ENCODE measurements at regions of chr4 and their contacts with region 1.

Region 1: GRCh38 chr4:102439236-102439614 is 61.9 kb upstream of the NFKB1 start:
- ATAC-seq: peak; percentile 61 to 86 (median 72)
- H3K4me3 ChIP-seq: no peak overlapping the region
- H3K27ac ChIP-seq: peak overlapping the region in 1 of 2 donors; percentile 25
- H3K4me1 ChIP-seq: peaks cover 4 to 14% of the 10 kb centered on the region in 2 donors

Region 2: DNA sequence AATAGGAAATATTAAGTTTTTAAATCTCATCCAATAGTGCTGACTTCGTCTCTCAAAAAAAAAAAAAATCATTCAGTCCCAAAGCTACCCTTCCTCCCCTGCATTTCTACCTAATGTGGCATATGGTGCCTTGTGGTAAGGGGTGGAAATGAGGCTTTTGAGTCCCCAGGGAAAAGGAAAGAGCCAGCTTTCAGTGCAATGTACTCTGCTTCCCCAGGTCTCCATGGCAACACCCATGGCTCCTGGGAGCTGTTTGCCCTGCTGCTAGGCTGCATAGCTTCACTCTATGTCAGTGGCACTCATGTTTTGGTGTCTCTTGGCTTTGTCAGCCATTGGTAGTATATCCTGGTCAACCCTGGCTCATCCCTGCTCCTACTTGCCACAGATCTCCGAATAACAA is 269.9 kb before region 1 on chr4:
- in situ Hi-C with region 1: no loop called
- ATAC-seq: peak; percentile 49 to 100 (median 100)
- H3K4me3 ChIP-seq: no peak overlapping the region
- H3K27ac ChIP-seq: no peak overlapping the region
- H3K4me1 ChIP-seq: peaks cover 3 to 15% of the 10 kb centered on the region in 2 donors

Region 3: DNA sequence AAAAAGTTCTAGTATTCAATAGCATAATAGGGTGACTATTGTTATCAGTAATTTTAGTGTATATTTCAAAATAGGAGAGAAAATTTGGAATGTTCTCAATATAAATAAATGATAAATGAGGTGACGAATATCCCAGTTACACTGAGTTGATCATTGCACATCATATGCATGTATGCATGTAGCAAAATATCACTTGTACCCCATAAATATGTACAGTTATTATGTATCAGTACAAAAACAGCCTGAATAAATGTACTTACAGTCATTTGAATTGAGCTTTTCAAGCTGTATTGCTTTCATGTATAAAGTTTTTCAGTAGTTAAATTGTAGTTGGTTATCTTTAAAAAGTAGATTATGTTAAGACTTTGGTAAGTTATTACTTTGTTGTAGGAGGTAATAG is 442.1 kb after region 1 on chr4:
- in situ Hi-C with region 1: no loop called
- ATAC-seq: peak in 1 of 8 experiments; percentile 83
- H3K4me3 ChIP-seq: no peak overlapping the region
- H3K27ac ChIP-seq: no peak overlapping the region
- H3K4me1 ChIP-seq: no peaks in the 10 kb centered on the region

Region 4: DNA sequence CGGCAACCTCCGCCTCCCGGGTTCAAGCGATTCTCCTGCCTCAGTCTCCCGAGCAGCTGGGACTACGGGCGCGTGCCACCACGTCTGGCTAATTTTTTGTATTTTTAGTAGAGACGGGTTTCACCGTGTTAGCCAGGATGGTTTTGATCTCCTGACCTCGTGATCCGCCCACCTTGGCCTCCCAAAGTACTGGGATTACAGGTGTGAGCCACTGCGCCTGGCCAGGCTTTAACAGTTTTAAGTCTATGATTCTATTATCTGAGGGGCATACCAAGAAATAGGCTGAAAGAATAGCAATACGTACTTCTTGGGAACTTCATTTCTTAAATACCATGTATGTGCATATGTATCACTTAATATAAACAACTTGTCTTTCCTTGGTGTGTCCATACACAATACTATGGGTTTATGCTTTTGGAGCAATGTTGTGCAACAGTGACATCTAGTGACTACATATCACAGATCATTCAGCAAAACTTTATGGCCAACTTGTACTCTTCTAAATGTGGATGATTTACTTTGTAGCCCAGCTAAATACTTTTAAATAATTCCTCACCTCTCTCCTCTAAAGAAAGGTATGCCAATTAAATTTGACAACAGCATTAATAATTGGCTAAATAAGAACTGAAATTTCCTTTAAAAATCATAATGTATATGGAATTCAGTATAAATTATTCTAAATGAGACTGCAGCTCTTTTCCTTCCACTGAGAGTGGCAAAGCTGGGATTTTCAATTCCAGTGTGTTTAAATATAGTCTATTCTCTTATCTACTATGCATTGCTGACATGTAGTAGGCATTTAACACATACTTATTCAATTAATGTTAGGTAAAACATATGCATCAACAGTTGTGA is 569.9 kb after region 1 on chr4:
- in situ Hi-C with region 1: loop called in 5 of 9 experiments (anchors 10 to 25 kb)
- ATAC-seq: peak; percentile 42 to 82 (median 64)
- H3K4me3 ChIP-seq: no peak overlapping the region
- H3K27ac ChIP-seq: no peak overlapping the region
- H3K4me1 ChIP-seq: no peaks in the 10 kb centered on the region

Measured in motor neuron (in vitro differentiated cells).